OCI-LY7 (cell line): ENCODE measurements at regions of chr11 and their contacts with region 1.

Region 1: GRCh38 chr11:27497284-27497866 is 9.2 kb downstream of the LIN7C start:
- DNase-seq: peak; percentile 44
- H3K4me3 ChIP-seq: no peak overlapping the region
- H3K27ac ChIP-seq: no peak overlapping the region
- H3K4me1 ChIP-seq: peaks cover 3% of the 10 kb centered on the region
- CTCF ChIP-seq: peak; percentile 86

Region 2: DNA sequence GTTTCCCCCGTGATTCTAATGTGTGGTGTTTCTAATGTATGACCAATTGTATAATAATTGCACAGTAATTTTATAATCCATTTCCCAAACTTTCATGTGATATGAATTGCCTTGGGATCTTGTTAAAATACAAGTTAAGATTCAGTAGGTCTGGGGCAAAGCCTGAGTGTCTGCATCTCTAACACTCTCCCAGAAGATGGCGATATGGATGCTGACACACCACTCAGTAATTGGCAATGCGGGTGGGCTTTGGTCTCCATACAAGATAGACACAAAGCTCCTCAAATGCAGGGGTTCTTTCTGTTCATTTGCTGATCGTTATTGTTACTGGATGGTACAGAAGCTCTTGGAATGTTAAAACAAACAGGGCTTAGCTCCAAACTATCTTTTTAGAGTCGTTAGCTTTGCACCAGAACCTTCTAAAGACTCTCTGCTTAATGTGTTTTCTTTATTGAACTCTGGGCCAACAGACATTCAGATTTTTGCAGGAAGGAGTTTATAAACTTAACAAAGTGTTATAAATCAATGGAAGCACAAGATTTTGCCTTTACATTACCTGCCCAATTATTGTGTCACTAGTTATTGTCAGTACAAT is 1210.8 kb before region 1 on chr11:
- CTCF ChIA-PET with region 1: no interaction called
- POLR2A ChIA-PET with region 1: no interaction called
- intact Hi-C with region 1: loop called (anchors 10 kb)
- DNase-seq: peak; percentile 42
- H3K4me3 ChIP-seq: no peak overlapping the region
- H3K27ac ChIP-seq: no peak overlapping the region
- H3K4me1 ChIP-seq: peaks cover 5% of the 10 kb centered on the region
- CTCF ChIP-seq: peak; percentile 83

Region 3: DNA sequence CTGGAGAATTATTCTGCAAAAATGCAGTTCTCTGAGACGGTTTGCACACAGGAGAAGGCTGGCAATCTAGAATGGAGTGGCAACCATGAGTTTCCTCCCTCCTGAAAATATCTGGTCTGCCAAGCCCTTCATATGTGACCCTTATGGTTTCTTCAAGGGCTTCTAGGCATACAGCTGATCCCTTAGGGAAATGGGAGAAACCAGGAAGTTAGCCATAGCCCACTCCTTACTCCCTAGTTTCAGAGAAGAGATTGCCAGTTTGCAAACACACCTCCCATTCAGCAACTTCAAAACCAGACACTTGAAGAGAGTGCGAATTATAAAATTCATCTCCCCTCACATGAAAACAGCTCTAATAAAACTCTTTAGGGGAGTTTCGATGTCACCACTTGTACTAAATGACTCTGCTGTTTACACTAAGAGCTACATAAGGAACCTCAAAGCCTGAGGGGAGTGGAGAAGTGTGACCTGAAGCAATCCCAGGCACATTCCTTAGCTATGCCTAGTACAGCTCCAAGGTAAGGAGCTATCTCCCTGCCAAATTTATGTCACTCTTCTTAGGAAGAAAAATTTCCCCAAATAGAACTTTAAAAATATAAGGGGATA is 33.1 kb before region 1 on chr11:
- CTCF ChIA-PET with region 1: no interaction called
- POLR2A ChIA-PET with region 1: no interaction called
- intact Hi-C with region 1: no loop called
- DNase-seq: no peak
- H3K4me3 ChIP-seq: no peak overlapping the region
- H3K27ac ChIP-seq: no peak overlapping the region
- H3K4me1 ChIP-seq: no peaks in the 10 kb centered on the region
- CTCF ChIP-seq: no peak